Activated CD8-positive, alpha-beta T cell treated with anti-CD3 and anti-CD28 coated beads for 36 hours (primary cell): ENCODE measurements at regions of chr12 and their contacts with region 1.

Region 1: GRCh38 chr12:9741726-9742125 is 8.8 kb upstream of the CLECL1 start:
- DNase-seq: peak; percentile 95
- ATAC-seq: peak; percentile 69
- H3K4me3 Mint-ChIP-seq: peak overlapping the region; percentile 74
- H3K27ac Mint-ChIP-seq: peak overlapping the region; percentile 90
- H3K4me1 Mint-ChIP-seq: peaks cover 71% of the 10 kb centered on the region
- H3K27me3 Mint-ChIP-seq: no peaks in the 10 kb centered on the region
- CTCF ChIP-seq: no peak

Region 2: DNA sequence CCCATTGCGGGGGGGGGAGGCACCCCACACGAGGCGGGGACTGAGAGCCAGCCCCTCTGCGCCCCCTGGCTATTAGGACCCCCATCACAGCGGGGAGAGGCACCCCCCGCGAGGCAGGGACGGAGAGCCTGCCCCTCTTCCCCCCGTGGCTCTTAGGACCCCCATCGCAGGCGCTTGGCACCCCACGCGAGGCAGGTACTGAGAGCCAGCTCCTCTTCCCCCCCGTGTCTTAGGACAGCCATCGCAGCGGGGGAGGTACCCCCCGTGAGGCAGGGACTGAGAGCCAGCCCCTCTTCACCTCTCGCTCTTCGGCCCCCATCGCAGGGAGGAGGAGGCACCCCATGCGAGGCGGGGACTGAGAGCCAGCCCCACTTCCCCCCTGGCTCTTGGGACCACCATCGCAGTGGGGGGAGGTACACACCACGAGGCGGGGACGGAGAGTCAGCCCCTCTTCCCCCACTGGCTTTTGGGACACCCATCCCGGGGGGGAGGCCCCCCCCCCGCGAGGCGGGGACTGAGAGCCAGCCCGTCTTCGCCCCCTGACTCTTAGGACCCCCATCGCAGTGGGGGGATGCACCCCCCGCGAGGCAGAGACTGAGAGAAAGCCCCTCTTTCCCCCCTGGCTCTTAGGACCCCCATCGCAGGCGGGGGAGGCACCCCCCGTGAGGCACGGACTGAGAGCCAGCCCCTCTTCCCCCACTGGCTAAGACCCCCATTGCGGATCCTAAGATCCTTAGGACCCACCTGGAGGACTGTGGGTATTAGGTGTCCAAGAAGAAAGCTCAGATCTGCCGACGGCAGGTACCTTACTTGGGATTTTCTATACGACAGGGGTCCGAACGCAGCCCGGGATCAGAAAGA is 334.9 kb before region 1 on chr12:
- CTCF ChIA-PET with region 1: no interaction called
- POLR2A ChIA-PET with region 1: no interaction called
- intact Hi-C with region 1: no loop called
- DNase-seq: no peak
- ATAC-seq: no peak
- H3K4me3 Mint-ChIP-seq: no peak overlapping the region
- H3K27ac Mint-ChIP-seq: no peak overlapping the region
- H3K4me1 Mint-ChIP-seq: peaks cover under 1% of the 10 kb centered on the region
- H3K27me3 Mint-ChIP-seq: no peaks in the 10 kb centered on the region
- CTCF ChIP-seq: no peak

Region 3: DNA sequence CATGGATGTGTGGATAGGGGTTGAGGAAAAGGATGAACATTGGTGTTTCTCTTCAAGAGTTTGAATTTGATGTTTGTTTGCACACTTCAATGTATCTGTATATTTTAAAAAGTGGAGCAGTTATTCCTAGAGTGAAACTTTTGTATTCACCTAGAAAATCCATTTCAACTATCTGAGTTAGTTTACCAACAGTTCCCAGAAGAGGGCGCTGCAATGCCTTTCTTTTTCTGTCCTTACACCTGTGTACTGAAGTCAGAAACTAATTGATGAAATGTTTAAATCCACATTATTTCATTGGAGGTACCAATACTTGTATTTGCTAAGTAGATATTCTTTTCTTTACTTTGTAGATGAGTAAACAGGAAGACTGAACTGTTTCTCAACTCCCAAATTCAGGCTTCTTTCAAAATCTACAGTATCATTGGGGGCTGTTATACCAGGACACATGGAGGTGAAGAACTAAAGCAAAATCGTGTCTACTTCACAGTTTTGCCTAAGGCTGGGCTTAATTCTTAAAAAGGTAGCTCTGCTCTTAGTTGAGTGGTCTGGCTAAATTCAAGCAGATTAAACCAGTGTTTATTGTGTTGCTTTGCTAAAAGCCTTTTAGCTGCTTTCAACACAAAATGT is 107.4 kb before region 1 on chr12:
- CTCF ChIA-PET with region 1: interaction called, 11 read pairs
- POLR2A ChIA-PET with region 1: no interaction called
- intact Hi-C with region 1: no loop called
- DNase-seq: peak; percentile 92
- ATAC-seq: peak; percentile 89
- H3K4me3 Mint-ChIP-seq: peak overlapping the region; percentile 31
- H3K27ac Mint-ChIP-seq: peak overlapping the region; percentile 85
- H3K4me1 Mint-ChIP-seq: peaks cover 54% of the 10 kb centered on the region
- H3K27me3 Mint-ChIP-seq: no peaks in the 10 kb centered on the region
- CTCF ChIP-seq: peak; percentile 91

Region 4: DNA sequence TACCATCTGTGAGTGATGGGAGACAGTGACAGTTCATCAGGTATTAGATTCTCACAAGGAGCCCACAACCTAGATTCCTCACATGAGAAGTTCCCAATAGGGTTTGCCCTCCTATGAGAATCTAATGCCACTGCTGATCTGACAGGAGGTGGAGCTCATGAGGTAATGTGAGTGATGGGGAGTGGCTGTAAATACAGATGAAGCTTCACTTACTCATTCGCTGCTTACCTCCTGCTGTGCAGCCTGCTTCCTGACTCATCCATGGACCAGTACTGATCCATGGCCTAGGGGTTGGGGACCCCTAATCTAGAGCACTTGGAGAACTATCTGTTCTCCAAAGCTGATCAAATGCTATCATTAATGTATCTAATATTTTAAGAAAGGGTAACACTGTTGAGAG is 54.5 kb before region 1 on chr12:
- CTCF ChIA-PET with region 1: interaction called, 10 read pairs
- POLR2A ChIA-PET with region 1: interaction called, 4 read pairs
- intact Hi-C with region 1: no loop called
- DNase-seq: peak; percentile 43
- ATAC-seq: peak; percentile 70
- H3K4me3 Mint-ChIP-seq: no peak overlapping the region
- H3K27ac Mint-ChIP-seq: peak overlapping the region; percentile 42
- H3K4me1 Mint-ChIP-seq: peaks cover 74% of the 10 kb centered on the region
- H3K27me3 Mint-ChIP-seq: no peaks in the 10 kb centered on the region
- CTCF ChIP-seq: no peak

Region 5: DNA sequence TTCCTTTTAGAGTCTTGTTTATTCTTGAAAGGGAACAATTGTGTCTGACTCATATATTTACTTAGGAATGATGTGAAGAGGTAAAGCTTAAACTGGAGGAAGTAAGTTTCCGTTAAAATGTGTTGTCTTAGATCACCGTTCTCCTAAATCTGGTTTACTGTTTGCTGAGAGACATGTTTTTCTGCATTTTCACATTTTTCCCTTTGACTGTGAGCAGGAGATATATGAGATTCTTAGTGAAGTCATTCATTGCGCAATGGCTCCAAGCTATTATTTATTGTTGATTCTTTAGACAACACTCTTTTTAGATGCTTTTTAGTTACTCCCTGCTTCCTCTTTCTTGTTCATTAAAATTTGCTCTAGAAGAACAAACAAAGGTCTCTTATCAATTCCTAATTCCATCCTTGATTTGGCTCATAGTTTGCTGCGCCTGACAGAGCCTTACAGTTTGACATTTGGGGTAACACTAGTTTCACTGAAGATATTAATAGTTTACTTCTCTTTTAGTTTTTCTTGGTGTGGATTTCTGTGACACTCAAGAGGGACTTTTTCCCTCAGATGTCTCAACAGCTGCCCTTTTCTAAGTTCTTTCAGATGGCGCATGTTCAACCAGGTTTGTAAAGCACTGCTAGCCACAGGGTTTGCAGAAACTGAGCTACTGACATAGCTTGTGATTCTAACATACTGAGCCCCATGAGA is 20.2 kb before region 1 on chr12:
- CTCF ChIA-PET with region 1: interaction called, 11 read pairs
- POLR2A ChIA-PET with region 1: no interaction called
- intact Hi-C with region 1: no loop called
- DNase-seq: no peak
- ATAC-seq: peak; percentile 51
- H3K4me3 Mint-ChIP-seq: no peak overlapping the region
- H3K27ac Mint-ChIP-seq: no peak overlapping the region
- H3K4me1 Mint-ChIP-seq: peaks cover 34% of the 10 kb centered on the region
- H3K27me3 Mint-ChIP-seq: peaks cover 4% of the 10 kb centered on the region
- CTCF ChIP-seq: no peak

Region 6: GRCh38 chr12:9797722-9798619 is 56.2 kb after region 1 on chr12:
- CTCF ChIA-PET with region 1: interaction called, 791 read pairs
- POLR2A ChIA-PET with region 1: interaction called, 30 read pairs
- intact Hi-C with region 1: no loop called
- DNase-seq: peak; percentile 84
- ATAC-seq: peak; percentile 83
- H3K4me3 Mint-ChIP-seq: peak overlapping the region; percentile 74
- H3K27ac Mint-ChIP-seq: peak overlapping the region; percentile 86
- H3K4me1 Mint-ChIP-seq: peaks cover 47% of the 10 kb centered on the region
- H3K27me3 Mint-ChIP-seq: no peaks in the 10 kb centered on the region
- CTCF ChIP-seq: peak; percentile 80

Region 7: GRCh38 chr12:9925708-9926393 is 184.1 kb after region 1 on chr12:
- CTCF ChIA-PET with region 1: interaction called, 7 read pairs
- POLR2A ChIA-PET with region 1: no interaction called
- intact Hi-C with region 1: loop called (anchors 5 kb)
- DNase-seq: peak; percentile 7
- ATAC-seq: peak; percentile 73
- H3K4me3 Mint-ChIP-seq: peak overlapping the region; percentile 59
- H3K27ac Mint-ChIP-seq: peak overlapping the region; percentile 73
- H3K4me1 Mint-ChIP-seq: peaks cover 21% of the 10 kb centered on the region
- H3K27me3 Mint-ChIP-seq: no peaks in the 10 kb centered on the region
- CTCF ChIP-seq: peak; percentile 60